ENCODE measurements at regions of chr13 and their contacts with region 1.

Region 1: DNA sequence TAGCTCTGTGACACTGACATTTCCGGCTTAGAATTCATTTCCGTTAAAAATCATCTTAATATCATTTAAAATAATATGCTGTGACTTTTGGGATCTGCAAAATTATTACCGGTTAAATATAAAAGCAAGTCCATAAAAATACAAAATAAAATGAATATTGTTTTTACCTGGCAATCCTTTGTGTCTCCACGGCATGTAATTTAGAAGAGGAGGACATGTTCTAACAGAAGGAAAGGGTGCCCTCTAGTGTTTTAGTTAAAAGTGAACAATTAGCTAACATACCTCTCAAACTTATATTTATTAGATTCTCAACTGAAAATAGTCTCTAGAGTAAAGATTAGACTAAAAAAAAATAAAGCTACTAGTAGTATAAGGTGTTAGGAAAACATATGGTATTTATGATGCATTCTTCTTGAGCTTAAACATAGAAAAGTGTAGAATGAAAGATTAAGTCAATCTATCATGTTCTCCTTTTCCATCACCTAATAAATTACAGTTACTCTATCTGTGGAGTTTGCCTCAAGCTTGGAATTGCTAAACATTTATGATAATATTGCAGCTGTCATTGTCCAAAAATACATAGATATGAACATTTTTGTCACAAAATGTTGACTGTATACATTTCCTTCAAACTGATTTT is 676.7 kb upstream of the SPRY2 start:
- DNase-seq: peak; percentile 28
- ATAC-seq: peak; percentile 75
- H3K4me3 ChIP-seq: no peak overlapping the region
- H3K27ac ChIP-seq: no peak overlapping the region
- H3K4me1 ChIP-seq: peaks cover 6% of the 10 kb centered on the region; the same call in 1 of the 2 replicates
- H3K27me3 ChIP-seq: no peaks in the 10 kb centered on the region
- CTCF ChIP-seq: peak; percentile 50
- EP300 ChIP-seq: no peak
- POLR2A ChIP-seq: no peak
- RAD21 ChIP-seq: no peak

Region 2: GRCh38 chr13:80979035-80979641 is 38.5 kb before region 1 on chr13:
- CTCF ChIA-PET with region 1: interaction called, 7 read pairs
- POLR2A ChIA-PET with region 1: no interaction called
- in situ Hi-C with region 1: no loop called
- intact Hi-C with region 1: loop called (anchors 1 kb)
- DNase-seq: peak; percentile 57
- ATAC-seq: peak; percentile 83
- H3K4me3 ChIP-seq: no peak overlapping the region
- H3K27ac ChIP-seq: no peak overlapping the region
- H3K4me1 ChIP-seq: peaks cover 11% of the 10 kb centered on the region
- H3K27me3 ChIP-seq: no peaks in the 10 kb centered on the region
- CTCF ChIP-seq: peak; percentile 73
- EP300 ChIP-seq: no peak
- POLR2A ChIP-seq: no peak
- RAD21 ChIP-seq: 0 out of 2 replicates have a peak, but pooled peaks have one; percentile 10

Region 3: DNA sequence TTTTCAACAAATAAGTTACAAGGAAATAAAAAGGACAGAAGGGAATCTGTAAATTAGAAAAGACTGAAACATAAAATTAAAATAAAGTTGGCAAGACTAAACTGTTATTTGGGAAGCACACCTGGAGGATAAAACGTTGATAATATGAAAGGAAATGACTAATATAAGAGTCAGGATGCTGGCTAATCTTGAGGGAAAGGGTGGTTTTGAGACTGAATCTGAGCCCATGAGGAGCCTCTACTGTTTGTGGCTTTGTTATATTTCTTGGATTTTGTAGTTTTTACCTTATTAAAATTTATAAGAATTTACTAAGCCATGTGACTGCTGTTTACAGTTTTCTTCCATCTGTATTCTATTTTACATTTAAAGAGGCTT is 41.3 kb after region 1 on chr13:
- CTCF ChIA-PET with region 1: no interaction called
- POLR2A ChIA-PET with region 1: no interaction called
- in situ Hi-C with region 1: no loop called
- intact Hi-C with region 1: no loop called
- DNase-seq: no peak
- ATAC-seq: no peak
- H3K4me3 ChIP-seq: no peak overlapping the region
- H3K27ac ChIP-seq: no peak overlapping the region
- H3K4me1 ChIP-seq: no peaks in the 10 kb centered on the region
- H3K27me3 ChIP-seq: no peaks in the 10 kb centered on the region
- CTCF ChIP-seq: no peak
- EP300 ChIP-seq: no peak
- POLR2A ChIP-seq: no peak
- RAD21 ChIP-seq: no peak

Region 4: GRCh38 chr13:81487151-81487550 is 469.5 kb after region 1 on chr13:
- CTCF ChIA-PET with region 1: no interaction called
- POLR2A ChIA-PET with region 1: no interaction called
- in situ Hi-C with region 1: no loop called
- intact Hi-C with region 1: no loop called
- DNase-seq: peak; percentile 24
- ATAC-seq: peak; percentile 90
- H3K4me3 ChIP-seq: no peak overlapping the region
- H3K27ac ChIP-seq: no peak overlapping the region
- H3K4me1 ChIP-seq: no peaks in the 10 kb centered on the region
- H3K27me3 ChIP-seq: no peaks in the 10 kb centered on the region
- CTCF ChIP-seq: peak; percentile 52
- EP300 ChIP-seq: no peak
- POLR2A ChIP-seq: no peak
- RAD21 ChIP-seq: no peak

Measured in HepG2 (cell line).